ENCODE measurements at regions of chr12 and their contacts with region 1.

Region 1: DNA sequence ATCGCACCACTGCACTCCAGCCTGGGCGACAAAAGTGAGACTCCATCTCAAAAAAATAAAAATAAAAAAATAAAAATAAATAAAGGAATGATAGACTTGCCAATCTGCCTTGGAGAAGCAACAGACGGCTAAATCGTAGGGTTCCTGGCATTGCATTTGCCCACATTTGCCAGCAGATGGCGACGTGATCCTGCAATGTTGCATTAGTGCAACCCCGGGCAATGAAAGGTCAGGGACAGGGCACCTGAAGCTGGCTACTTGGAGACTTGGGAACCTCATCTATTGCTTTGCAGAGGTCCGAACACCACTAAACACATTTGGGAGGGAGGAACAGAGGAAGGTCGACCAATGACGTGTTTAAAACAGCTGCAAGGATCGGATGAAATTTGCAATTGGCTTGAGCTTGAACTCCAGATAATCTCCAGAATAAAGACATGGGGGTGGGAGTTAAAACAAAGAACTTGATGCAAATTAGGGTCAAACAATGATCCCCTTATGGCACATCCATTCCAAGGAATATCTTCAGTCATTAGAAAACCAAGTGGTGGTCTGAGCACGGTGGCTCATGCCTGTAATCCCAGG is 34.6 kb downstream of the SPRING1 start:
- DNase-seq: peak; percentile 58 to 62
- H3K4me3 ChIP-seq: no peak overlapping the region
- H3K27ac ChIP-seq: no peak overlapping the region
- H3K4me1 ChIP-seq: peaks cover 14% of the 10 kb centered on the region
- H3K27me3 ChIP-seq: no peaks in the 10 kb centered on the region
- CTCF ChIP-seq: peak; percentile 92

Region 2: GRCh38 chr12:115936997-115937916 is 766.0 kb before region 1 on chr12:
- CTCF ChIA-PET with region 1: no interaction called
- POLR2A ChIA-PET with region 1: no interaction called
- intact Hi-C with region 1: loop called (anchors 5 kb)
- DNase-seq: no peak
- H3K4me3 ChIP-seq: no peak overlapping the region
- H3K27ac ChIP-seq: no peak overlapping the region
- H3K4me1 ChIP-seq: no peaks in the 10 kb centered on the region
- H3K27me3 ChIP-seq: no peaks in the 10 kb centered on the region
- CTCF ChIP-seq: no peak

Region 3: DNA sequence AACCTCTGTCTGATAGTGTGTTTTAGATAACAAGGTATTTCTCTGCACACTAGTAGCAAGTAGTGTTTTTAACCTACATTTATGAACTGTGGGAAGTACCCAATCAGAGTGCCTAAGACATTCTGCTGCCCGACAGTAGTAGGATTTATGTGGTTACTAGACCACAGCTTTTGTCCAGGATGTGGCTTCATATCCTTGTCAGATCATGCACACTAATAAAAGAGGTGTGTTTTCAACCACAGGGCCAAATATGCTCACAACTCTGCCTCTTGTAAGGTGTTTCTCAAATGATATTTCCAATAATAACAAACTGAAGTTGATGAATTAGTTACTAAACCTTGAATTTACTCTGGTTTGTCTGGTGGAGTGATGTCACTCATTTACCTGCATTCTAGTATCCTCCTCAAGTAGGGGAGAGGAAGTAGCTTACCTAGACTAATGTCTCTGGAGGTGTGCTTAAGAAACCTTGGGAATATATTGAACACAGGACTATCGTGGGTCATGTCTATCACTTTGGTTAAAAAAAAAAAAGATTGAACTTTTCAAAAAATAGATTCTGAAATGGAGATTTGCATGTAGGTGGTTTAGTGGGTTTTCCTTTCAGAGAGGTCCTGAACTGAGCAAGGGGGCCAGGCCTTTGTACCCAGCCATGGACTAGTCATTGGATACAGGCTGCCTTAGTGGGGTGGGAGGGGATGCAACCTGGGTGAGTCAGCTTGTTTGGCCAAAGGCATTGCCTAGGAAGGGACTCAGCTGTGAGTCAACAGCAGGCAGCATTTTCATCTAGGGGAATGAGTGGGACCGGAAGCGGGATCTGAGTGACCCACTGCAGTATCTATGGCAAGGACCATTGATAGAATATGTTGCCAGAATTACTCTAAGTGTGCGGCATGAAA is 221.5 kb after region 1 on chr12:
- CTCF ChIA-PET with region 1: no interaction called
- POLR2A ChIA-PET with region 1: no interaction called
- intact Hi-C with region 1: no loop called
- DNase-seq: peak; percentile 16 to 84
- H3K4me3 ChIP-seq: no peak overlapping the region
- H3K27ac ChIP-seq: peak overlapping the region; percentile 69
- H3K4me1 ChIP-seq: peaks cover 21% of the 10 kb centered on the region
- H3K27me3 ChIP-seq: no peaks in the 10 kb centered on the region
- CTCF ChIP-seq: no peak

Region 4: GRCh38 chr12:116955382-116956021 is 252.2 kb after region 1 on chr12:
- CTCF ChIA-PET with region 1: interaction called, 4 read pairs
- POLR2A ChIA-PET with region 1: no interaction called
- intact Hi-C with region 1: loop called (anchors 1 kb)
- DNase-seq: peak; percentile 26 to 81
- H3K4me3 ChIP-seq: no peak overlapping the region
- H3K27ac ChIP-seq: no peak overlapping the region
- H3K4me1 ChIP-seq: peaks cover 5% of the 10 kb centered on the region; the same call in 1 of the 2 replicates
- H3K27me3 ChIP-seq: no peaks in the 10 kb centered on the region
- CTCF ChIP-seq: peak; percentile 63

Region 5: DNA sequence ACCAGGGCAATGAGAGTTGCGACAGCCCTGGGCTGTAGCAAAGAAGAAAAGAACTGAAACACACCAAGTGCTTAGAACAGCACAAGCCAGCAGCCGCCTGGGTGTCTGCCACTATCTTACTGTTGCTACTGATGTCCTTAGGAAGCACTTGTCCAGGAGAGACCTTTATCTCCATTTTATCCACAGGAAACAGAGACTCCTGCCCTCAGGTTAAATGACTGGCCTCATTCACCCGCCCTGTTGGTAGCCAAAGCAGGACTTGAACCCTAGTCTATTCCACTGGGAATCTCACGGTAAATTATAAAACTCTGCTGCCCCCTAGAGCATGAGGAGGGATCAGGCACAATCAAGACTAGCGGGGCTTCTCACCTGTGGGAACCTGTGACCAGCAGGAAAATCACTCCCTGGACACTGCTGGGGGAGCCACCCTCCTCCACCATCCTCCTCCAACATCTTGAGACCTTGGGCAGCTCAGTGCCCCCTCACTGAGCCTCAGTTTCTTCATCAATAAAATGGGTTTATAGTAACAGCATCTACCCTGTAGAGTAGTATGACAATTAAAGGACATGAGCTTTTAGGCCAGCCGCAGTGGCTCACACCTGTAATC is 416.4 kb after region 1 on chr12:
- CTCF ChIA-PET with region 1: interaction called, 3 read pairs
- POLR2A ChIA-PET with region 1: no interaction called
- intact Hi-C with region 1: loop called (anchors 2 kb)
- DNase-seq: peak in 1 of 2 experiments; percentile 25
- H3K4me3 ChIP-seq: no peak overlapping the region
- H3K27ac ChIP-seq: no peak overlapping the region
- H3K4me1 ChIP-seq: peaks cover 3% of the 10 kb centered on the region; the same call in 1 of the 2 replicates
- H3K27me3 ChIP-seq: no peaks in the 10 kb centered on the region
- CTCF ChIP-seq: peak; percentile 88

Region 6: DNA sequence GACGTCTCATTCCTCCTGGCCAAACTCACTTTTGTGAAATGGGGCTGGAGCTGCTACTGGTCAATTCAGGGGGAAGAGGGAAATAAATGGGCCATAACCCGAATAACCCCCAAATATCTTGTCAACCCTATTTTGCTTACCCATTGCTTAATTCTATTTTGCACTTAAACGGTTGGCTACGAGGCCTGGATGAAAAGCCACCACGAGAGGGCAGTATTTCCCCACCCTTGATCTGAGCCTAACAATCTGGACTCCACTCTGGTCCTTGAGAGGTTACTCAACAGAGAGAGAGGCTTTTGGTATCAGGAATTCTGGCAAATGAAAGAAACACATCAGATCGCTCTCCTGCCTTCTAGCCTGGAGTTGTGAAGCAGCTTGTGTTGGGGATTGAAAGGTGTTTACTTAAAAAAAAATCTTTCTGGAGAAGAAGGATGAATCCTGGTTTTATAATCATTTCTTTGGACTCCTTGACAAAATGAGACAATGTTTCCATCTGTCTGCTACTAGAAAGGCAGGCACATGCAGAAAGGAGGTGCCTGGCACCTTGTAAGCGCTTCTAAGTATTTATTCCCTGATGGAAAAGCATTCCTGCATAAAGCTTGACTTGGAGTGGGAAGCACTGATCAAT is 509.4 kb after region 1 on chr12:
- CTCF ChIA-PET with region 1: no interaction called
- POLR2A ChIA-PET with region 1: no interaction called
- intact Hi-C with region 1: no loop called
- DNase-seq: peak; percentile 53 to 62
- H3K4me3 ChIP-seq: no peak overlapping the region
- H3K27ac ChIP-seq: no peak overlapping the region
- H3K4me1 ChIP-seq: no peaks in the 10 kb centered on the region
- H3K27me3 ChIP-seq: peaks cover 94% of the 10 kb centered on the region
- CTCF ChIP-seq: peak; percentile 92

Region 7: DNA sequence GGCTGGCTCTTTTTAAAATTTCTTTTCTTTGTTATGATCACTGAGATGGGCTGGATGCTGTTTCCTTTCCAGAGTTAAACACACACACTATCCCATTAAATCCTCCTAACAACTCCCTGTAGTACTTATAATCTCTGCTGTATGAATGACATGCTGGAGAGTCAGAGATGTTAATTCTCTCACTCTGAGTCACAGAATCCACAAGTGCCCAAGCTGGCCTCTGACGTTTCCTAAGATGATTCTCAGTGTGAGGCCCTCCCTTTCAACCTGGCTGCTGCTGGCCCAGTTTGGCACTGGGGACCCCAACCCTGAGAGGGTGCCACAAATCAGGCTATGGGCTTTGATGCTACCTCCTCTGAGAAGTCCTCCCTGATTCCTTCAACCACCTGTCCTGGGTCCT is 652.7 kb after region 1 on chr12:
- CTCF ChIA-PET with region 1: no interaction called
- POLR2A ChIA-PET with region 1: no interaction called
- intact Hi-C with region 1: loop called (anchors 10 kb)
- DNase-seq: no peak
- H3K4me3 ChIP-seq: no peak overlapping the region
- H3K27ac ChIP-seq: no peak overlapping the region
- H3K4me1 ChIP-seq: no peaks in the 10 kb centered on the region
- H3K27me3 ChIP-seq: peaks cover 84% of the 10 kb centered on the region
- CTCF ChIP-seq: no peak

Measured in PC-9 (cell line).